ENCODE measurements at regions of chr10 and their contacts with region 1.

Region 1: DNA sequence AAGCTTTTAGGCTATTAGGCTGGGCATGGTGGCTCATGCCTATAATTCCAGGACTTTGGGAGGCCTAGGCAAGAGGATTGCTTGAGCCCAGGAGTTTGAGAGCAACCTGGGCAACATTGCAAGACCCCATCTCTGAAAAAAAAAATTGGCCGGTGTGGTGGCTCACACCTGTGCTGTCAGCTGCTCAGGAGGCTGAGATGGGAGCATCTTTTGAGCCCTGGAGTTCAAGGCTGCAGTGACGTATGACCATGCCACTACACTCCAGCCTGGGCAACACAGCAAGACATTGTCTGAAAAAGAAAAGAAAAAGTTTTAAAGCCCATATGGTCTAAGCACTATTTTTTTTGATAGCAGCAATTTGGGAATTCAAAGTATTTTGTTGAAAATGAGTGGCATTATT is 15.8 kb upstream of the SEC61A2 start:
- DNase-seq: no peak
- H3K4me3 Mint-ChIP-seq: peak overlapping the region; percentile 63
- H3K27ac Mint-ChIP-seq: no peak overlapping the region
- H3K4me1 Mint-ChIP-seq: peaks cover 25% of the 10 kb centered on the region
- H3K27me3 Mint-ChIP-seq: no peaks in the 10 kb centered on the region

Region 2: DNA sequence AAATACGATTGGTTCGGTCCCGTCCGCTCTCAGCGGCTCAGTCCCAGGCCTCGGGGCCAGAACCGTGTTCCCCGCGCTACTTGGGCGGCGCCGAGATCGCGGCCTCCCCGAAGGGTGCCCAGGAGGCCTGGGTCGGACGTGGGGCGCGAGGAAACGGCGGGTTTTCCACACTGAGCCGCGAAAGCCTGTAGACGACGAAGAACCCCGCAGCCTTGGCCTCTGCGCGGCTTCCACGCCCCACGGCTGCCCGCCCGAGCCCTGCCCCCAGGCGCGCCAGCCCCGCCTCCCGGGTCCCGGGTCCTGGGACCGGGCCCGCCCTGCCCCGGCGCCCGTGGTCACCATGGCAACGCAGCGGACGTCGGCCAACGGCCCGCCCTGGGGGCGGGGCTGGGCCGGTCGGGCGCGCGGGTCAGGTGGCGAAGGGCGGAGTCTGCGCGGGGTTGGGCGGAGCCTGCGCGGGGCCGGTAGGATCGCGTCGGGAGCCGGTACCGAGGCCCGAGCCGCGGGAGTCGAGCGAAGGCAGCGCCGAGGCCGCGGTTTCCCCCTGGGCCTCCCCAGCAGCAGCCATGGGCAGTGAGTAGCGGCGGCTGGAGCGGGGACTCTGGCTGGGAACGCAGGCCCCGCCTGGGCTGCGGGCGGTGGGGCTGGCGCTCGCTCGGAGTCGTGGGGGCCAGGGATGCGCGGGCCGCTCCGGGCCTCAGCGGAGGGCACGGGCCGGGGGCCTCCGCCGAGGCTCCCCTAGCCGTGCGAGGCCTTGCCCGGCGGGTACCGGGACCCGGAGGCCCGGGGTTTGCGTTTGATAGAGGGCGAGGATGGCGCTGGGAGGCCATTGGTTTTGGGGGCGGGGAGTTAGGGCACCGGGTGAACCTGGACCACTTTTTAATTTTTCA is 15.8 kb after region 1 on chr10 and contains the start of gene SEC61A2:
- intact Hi-C with region 1: loop called (anchors 2 kb)
- DNase-seq: peak; percentile 100
- H3K4me3 Mint-ChIP-seq: peak within 1 kb of the TSS; percentile 85
- H3K27ac Mint-ChIP-seq: peak within 1 kb of the TSS; percentile 90
- H3K4me1 Mint-ChIP-seq: peaks cover 30% of the 10 kb centered on the region
- H3K27me3 Mint-ChIP-seq: no peaks in the 10 kb centered on the region
- total RNA-seq, gene SEC61A2: 13.3 and 21.2 TPM in 2 replicates